K562 (cell line): ENCODE measurements at regions of chr1 and their contacts with region 1.

Region 1: GRCh38 chr1:32335790-32336590 is at the start of gene MARCKSL1:
- DNase-seq: peak; percentile 89 to 95 (median 94)
- ATAC-seq: peak; percentile 77
- H3K4me3 ChIP-seq: peak within 1 kb of the TSS; percentile 89
- H3K27ac ChIP-seq: peak within 1 kb of the TSS; percentile 88
- H3K4me1 ChIP-seq: peaks cover 25 to 50% of the 10 kb centered on the region in 2 experiments
- H3K27me3 ChIP-seq: no peaks in the 10 kb centered on the region
- CTCF ChIP-seq: no peak
- EP300 ChIP-seq: no peak
- POLR2A ChIP-seq: peak; percentile 91
- RAD21 ChIP-seq: no peak
- polyA plus RNA-seq, gene MARCKSL1: 14.7 to 14.8 TPM

Region 2: GRCh38 chr1:31767225-31767624 is 568.8 kb before region 1 on chr1:
- CTCF ChIA-PET with region 1: no interaction called
- POLR2A ChIA-PET with region 1: no interaction called
- in situ Hi-C with region 1: no loop called
- intact Hi-C with region 1: no loop called
- DNase-seq: no peak
- ATAC-seq: no peak
- H3K4me3 ChIP-seq: no peak overlapping the region
- H3K27ac ChIP-seq: no peak overlapping the region
- H3K4me1 ChIP-seq: peaks cover 27 to 40% of the 10 kb centered on the region in 2 experiments
- H3K27me3 ChIP-seq: peaks cover 22 to 64% of the 10 kb centered on the region in 2 experiments; a peak in 4 of 5 replicates
- CTCF ChIP-seq: no peak
- EP300 ChIP-seq: no peak
- POLR2A ChIP-seq: no peak
- RAD21 ChIP-seq: no peak

Region 3: GRCh38 chr1:32321712-32322291 is 14.2 kb before region 1 on chr1:
- CTCF ChIA-PET with region 1: no interaction called
- POLR2A ChIA-PET with region 1: interaction called, 75 read pairs
- in situ Hi-C with region 1: no loop called
- intact Hi-C with region 1: no loop called
- DNase-seq: no peak
- ATAC-seq: no peak; the same call in 2 of the 3 replicates
- H3K4me3 ChIP-seq: no peak overlapping the region
- H3K27ac ChIP-seq: no peak overlapping the region
- H3K4me1 ChIP-seq: no peaks in the 10 kb centered on the region
- H3K27me3 ChIP-seq: no peaks in the 10 kb centered on the region
- CTCF ChIP-seq: no peak
- EP300 ChIP-seq: no peak
- POLR2A ChIP-seq: no peak
- RAD21 ChIP-seq: no peak

Region 4: GRCh38 chr1:32351399-32352238 is 15.6 kb after region 1 on chr1:
- CTCF ChIA-PET with region 1: no interaction called
- POLR2A ChIA-PET with region 1: interaction called, 59 read pairs
- in situ Hi-C with region 1: no loop called
- intact Hi-C with region 1: no loop called
- DNase-seq: peak; percentile 99 to 100 (median 100)
- ATAC-seq: peak; percentile 95
- H3K4me3 ChIP-seq: peak overlapping the region; percentile 83
- H3K27ac ChIP-seq: peak overlapping the region; percentile 96
- H3K4me1 ChIP-seq: peaks cover 29 to 44% of the 10 kb centered on the region in 2 experiments
- H3K27me3 ChIP-seq: no peaks in the 10 kb centered on the region
- CTCF ChIP-seq: peak in 2 of 3 experiments; percentile 34 to 49; a peak in 5 of 6 replicates
- EP300 ChIP-seq: no peak
- POLR2A ChIP-seq: peak; percentile 76
- RAD21 ChIP-seq: no peak

Region 5: GRCh38 chr1:32413507-32414185 is 77.7 kb after region 1 on chr1:
- CTCF ChIA-PET with region 1: interaction called, 3 read pairs
- POLR2A ChIA-PET with region 1: interaction called, 5 read pairs
- in situ Hi-C with region 1: no loop called
- intact Hi-C with region 1: loop called (anchors 1 kb)
- DNase-seq: peak; percentile 80 to 96 (median 82)
- ATAC-seq: peak; percentile 99
- H3K4me3 ChIP-seq: no peak overlapping the region
- H3K27ac ChIP-seq: peak overlapping the region; percentile 69
- H3K4me1 ChIP-seq: peaks cover 0 to 7% of the 10 kb centered on the region in 2 experiments; a peak in 3 of 5 replicates
- H3K27me3 ChIP-seq: no peaks in the 10 kb centered on the region
- CTCF ChIP-seq: peak; percentile 87 to 98 (median 93)
- EP300 ChIP-seq: no peak
- POLR2A ChIP-seq: no peak
- RAD21 ChIP-seq: peak; percentile 93 to 99